ENCODE measurements at regions of chr15 and their contacts with region 1.

Region 1: DNA sequence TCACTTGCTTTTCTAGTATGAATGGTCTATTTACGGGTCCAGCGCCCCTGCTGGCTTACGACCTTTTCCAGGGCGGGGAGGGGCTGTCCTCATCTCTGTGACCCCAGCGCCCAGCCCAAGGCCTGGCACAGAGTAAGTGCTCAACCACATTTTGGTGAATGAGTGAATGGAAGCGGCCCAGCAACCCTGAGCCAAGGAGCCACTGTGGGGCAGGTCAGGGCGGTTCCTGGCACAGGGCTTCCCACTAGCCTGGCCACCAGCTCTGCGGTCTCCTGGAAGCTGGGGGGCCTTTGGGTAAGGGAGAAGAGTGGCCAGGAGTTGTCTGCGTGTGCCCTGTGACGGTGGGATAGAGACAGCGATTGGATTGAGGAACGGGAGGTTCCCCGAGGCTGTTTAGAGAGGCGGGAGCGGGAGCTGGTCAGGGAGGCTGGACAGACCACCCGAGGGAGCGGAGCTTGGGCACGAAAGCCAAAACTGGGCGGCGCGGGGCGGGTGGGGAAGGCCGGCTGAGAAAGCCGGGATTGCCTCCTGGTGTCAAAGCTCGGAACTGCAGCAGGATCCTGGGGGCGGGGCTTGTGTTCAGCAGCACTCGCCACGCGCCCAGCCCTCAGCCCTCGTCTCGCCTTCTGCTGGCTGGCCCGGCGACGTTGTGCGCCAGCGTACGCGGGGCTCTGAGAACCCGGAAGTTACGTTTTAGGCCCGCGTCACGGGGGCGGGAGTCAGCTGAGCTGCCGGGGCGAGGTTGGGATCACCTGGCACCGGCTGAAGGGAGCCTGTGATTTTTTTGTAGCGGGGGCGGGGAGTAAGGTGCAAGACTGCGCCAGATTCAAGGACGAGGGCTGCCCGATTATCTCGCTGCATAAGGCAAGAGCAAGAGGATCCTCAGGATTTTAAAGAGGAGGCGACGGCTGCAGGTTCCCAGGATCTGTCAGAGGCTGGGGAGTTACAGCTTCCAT is at the start of gene VPS18:
- DNase-seq: peak; percentile 95 to 100
- H3K4me3 ChIP-seq: peak within 1 kb of the TSS; percentile 60 to 93 (median 88)
- H3K27ac ChIP-seq: peak within 1 kb of the TSS; percentile 68
- H3K4me1 ChIP-seq: peaks cover 3 to 14% (median 7%) of the 10 kb centered on the region in 4 experiments; a peak in 6 of 7 replicates
- H3K27me3 ChIP-seq: peaks cover 0 to 8% (median 2%) of the 10 kb centered on the region in 4 experiments; a peak in 3 of 7 replicates
- CTCF ChIP-seq: peak; percentile 85 to 91 (median 89)
- EP300 ChIP-seq: no peak
- POLR2A ChIP-seq: peak in 1 of 2 experiments; percentile 35; a peak in 2 of 3 replicates
- RAD21 ChIP-seq: peak; percentile 87 to 88
- total RNA-seq, gene VPS18: 31.9 and 32.7 TPM in 2 replicates

Region 2: GRCh38 chr15:40743921-40744814 is 149.8 kb before region 1 on chr15:
- CTCF ChIA-PET with region 1: interaction called, 18 read pairs
- POLR2A ChIA-PET with region 1: interaction called, 4 read pairs
- DNase-seq: no peak
- H3K4me3 ChIP-seq: no peak overlapping the region
- H3K27ac ChIP-seq: no peak overlapping the region
- H3K4me1 ChIP-seq: peaks cover 9 to 16% (median 10%) of the 10 kb centered on the region in 4 experiments
- H3K27me3 ChIP-seq: no peaks in the 10 kb centered on the region
- CTCF ChIP-seq: peak in 2 of 3 experiments; percentile 10 to 15; a peak in 2 of 4 replicates
- EP300 ChIP-seq: no peak
- POLR2A ChIP-seq: no peak
- RAD21 ChIP-seq: peak in 1 of 2 experiments; percentile 9; a peak in 1 of 4 replicates

Region 3: DNA sequence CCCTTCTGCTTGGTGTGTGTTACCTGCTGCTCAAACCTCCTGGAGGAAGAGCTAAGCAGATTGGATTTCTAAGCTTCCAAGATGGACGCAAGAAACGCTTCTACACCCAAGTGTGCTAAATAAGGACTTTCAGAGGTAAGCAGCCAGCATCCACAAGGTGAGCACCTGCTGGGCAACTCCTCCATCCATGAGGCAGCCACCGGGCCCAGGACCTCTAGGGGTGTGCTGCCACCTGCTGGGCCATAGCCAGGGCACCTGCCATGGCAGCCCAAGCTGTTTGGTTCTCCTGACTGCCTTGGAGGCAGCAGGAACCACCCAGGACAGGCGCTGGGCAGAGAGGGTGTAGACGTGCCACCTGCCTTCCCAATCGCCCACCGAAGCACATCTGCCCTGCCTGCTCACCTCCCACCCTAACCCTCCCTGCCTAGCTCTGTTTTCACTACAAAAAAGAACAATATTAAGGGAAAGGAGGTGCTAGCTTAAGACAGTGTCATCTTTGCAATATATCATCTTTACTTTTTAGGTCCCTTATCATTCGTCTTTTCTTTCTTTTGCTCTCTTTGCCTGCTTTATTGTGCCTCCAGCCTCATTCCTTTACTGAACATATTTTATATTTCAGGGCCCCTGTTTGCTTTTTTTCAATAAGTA is 111.3 kb before region 1 on chr15:
- CTCF ChIA-PET with region 1: interaction called, 18 read pairs
- POLR2A ChIA-PET with region 1: no interaction called
- DNase-seq: peak; percentile 46 to 64
- H3K4me3 ChIP-seq: no peak overlapping the region
- H3K27ac ChIP-seq: no peak overlapping the region
- H3K4me1 ChIP-seq: peaks cover 8 to 23% (median 13%) of the 10 kb centered on the region in 4 experiments; a peak in 6 of 7 replicates
- H3K27me3 ChIP-seq: no peaks in the 10 kb centered on the region
- CTCF ChIP-seq: peak; percentile 77 to 79 (median 79)
- EP300 ChIP-seq: no peak
- POLR2A ChIP-seq: no peak
- RAD21 ChIP-seq: peak; percentile 73 to 83

Region 4: GRCh38 chr15:40863660-40864270 is 30.2 kb before region 1 on chr15:
- CTCF ChIA-PET with region 1: interaction called, 208 read pairs
- POLR2A ChIA-PET with region 1: interaction called, 49 read pairs
- DNase-seq: no peak
- H3K4me3 ChIP-seq: no peak overlapping the region
- H3K27ac ChIP-seq: no peak overlapping the region
- H3K4me1 ChIP-seq: no peaks in the 10 kb centered on the region
- H3K27me3 ChIP-seq: no peaks in the 10 kb centered on the region
- CTCF ChIP-seq: no peak
- EP300 ChIP-seq: no peak
- POLR2A ChIP-seq: no peak
- RAD21 ChIP-seq: no peak

Region 5: DNA sequence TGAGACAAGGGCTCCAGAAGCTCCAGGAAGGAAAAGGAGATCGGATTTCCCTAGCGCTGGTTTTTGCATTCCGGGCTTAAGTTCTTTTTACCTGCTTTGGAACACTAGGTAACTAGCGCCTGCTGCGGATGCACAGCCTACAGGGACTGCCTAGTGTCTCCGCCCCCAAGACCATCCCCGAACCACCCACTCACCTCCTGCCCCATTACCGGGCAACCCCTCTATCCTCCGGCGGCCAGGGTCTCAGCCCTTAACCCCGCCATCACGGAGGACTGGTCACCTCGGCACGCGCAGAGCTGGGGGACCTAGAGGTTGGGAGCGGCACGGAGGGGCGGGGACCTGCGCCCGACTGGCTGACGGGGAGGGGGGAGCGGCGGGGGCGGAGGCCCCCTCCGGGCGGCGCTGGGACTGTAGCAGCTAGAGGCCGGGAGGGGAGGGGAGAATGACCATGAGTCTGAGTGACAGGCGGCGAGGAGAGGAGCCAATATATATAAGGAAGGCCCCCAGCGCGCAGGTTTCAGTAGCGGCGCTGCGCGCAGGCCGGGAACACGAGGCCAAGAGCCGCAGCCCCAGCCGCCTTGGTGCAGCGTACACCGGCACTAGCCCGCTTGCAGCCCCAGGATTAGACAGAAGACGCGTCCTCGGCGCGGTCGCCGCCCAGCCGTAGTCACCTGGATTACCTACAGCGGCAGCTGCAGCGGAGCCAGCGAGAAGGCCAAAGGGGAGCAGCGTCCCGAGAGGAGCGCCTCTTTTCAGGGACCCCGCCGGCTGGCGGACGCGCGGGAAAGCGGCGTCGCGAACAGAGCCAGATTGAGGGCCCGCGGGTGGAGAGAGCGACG is 35.0 kb after region 1 on chr15 and contains the start of gene DLL4:
- CTCF ChIA-PET with region 1: interaction called, 619 read pairs
- POLR2A ChIA-PET with region 1: interaction called, 6 read pairs
- DNase-seq: peak in 1 of 2 experiments; percentile 87
- H3K4me3 ChIP-seq: peak within 1 kb of the TSS; percentile 31 to 71 (median 46)
- H3K27ac ChIP-seq: no peak within 1 kb of the TSS
- H3K4me1 ChIP-seq: peaks cover 3 to 36% (median 21%) of the 10 kb centered on the region in 4 experiments
- H3K27me3 ChIP-seq: peaks cover 69 to 94% (median 90%) of the 10 kb centered on the region in 4 experiments
- CTCF ChIP-seq: no peak
- EP300 ChIP-seq: no peak
- POLR2A ChIP-seq: peak in 1 of 2 experiments; percentile 69; a peak in 2 of 3 replicates
- RAD21 ChIP-seq: no peak
- total RNA-seq, gene DLL4: 0.48 and 0.60 TPM in 2 replicates

Region 6: DNA sequence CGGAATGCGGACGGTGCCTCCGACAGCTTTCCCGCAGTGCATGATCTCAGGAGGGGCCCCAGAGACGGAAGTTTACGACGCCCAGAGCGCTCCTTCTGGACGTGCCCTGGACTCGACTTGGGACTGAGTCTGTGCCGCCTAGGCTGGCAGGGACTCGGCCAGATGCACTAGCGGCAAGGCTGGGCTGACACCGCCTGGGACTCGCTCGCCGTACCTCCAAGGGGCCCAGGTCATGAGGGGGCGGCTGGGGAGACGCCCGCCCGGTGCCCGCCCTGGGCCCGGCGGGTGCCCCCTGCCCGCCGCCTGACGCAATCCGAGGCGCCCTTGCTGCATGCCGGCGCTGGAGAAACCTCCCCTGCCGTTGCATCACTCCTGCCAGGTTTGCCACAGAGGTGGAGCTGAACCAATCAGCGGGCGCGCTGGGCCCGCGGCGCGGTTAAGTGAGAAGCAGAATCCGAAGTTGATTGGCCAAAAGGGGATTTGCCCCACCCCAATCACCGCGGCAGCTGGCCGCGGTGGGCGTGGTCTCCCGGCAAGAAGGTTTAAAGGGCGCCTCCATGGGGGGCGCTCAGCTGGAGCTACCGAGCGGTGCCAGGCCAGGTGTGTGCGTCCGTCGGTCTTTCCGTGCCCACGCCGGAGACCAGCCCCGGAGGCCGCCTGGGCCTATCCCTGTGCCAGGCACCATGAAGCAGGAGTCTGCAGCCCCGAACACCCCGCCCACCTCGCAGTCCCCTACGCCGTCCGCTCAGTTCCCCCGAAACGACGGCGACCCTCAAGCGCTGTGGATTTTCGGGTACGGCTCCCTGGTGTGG is 59.1 kb after region 1 on chr15 and contains the start of gene CHAC1:
- CTCF ChIA-PET with region 1: interaction called, 6 read pairs
- POLR2A ChIA-PET with region 1: interaction called, 26 read pairs
- DNase-seq: peak; percentile 96 to 97
- H3K4me3 ChIP-seq: peak within 1 kb of the TSS; percentile 74 to 92 (median 82)
- H3K27ac ChIP-seq: peak within 1 kb of the TSS; percentile 97
- H3K4me1 ChIP-seq: peaks cover 2 to 20% (median 12%) of the 10 kb centered on the region in 4 experiments
- H3K27me3 ChIP-seq: no peaks in the 10 kb centered on the region
- CTCF ChIP-seq: peak in 1 of 3 experiments; percentile 0; a peak in 1 of 4 replicates
- EP300 ChIP-seq: peak in 1 of 2 experiments; percentile 50; a peak in 1 of 3 replicates
- POLR2A ChIP-seq: peak; percentile 76 to 85
- RAD21 ChIP-seq: peak in 1 of 2 experiments; percentile 10; a peak in 1 of 4 replicates
- total RNA-seq, gene CHAC1: 28.7 and 34.3 TPM in 2 replicates

Region 7: GRCh38 chr15:40999190-40999589 is 105.2 kb after region 1 on chr15:
- CTCF ChIA-PET with region 1: no interaction called
- POLR2A ChIA-PET with region 1: no interaction called
- DNase-seq: no peak
- H3K4me3 ChIP-seq: no peak overlapping the region
- H3K27ac ChIP-seq: no peak overlapping the region
- H3K4me1 ChIP-seq: no peaks in the 10 kb centered on the region
- H3K27me3 ChIP-seq: no peaks in the 10 kb centered on the region
- CTCF ChIP-seq: no peak
- EP300 ChIP-seq: no peak
- POLR2A ChIP-seq: no peak
- RAD21 ChIP-seq: no peak